Right ventricle myocardium superior (tissue), 1 donor: ENCODE measurements at regions of chr5 and their contacts with region 1.

Region 1: DNA sequence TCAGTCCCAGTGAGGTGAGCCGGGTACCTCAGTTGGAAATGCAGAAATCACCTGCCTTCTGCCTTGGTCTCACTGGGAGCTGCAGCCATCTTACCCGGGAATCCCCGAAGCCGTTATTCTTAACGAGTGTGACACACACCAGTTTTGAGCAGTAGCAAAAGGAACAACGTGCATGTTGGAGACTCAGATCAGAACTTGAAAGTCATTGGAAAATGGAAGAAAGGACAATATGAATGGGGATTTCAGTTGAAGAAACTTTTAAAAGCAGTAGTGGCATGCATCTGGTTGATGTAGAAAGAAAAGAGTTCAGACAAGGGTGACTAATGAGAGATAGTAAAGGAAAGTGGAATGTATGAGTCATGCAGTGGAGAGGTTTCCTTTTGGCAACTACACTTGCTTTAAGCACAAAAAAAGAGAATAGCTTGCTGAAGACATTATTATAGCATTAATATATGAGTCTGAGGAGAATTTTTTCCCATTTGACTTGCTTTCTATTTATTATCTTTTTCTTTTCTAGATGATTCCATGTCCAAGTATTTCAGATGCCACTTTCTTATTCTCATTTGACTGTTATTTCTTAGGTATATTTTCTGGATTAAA is 44.4 kb upstream of the ANKDD1B start:
- DNase-seq: no peak
- ATAC-seq: peak; percentile 98

Region 2: GRCh38 chr5:75511435-75512384 is 55.1 kb before region 1 on chr5 and contains the starts of genes CERT1 and POLK:
- intact Hi-C with region 1: loop called (anchors 10 kb)
- DNase-seq: peak; percentile 98
- ATAC-seq: peak; percentile 96
- total RNA-seq, gene CERT1: 32.1 TPM
- total RNA-seq, gene POLK: 20.6 TPM

Region 3: DNA sequence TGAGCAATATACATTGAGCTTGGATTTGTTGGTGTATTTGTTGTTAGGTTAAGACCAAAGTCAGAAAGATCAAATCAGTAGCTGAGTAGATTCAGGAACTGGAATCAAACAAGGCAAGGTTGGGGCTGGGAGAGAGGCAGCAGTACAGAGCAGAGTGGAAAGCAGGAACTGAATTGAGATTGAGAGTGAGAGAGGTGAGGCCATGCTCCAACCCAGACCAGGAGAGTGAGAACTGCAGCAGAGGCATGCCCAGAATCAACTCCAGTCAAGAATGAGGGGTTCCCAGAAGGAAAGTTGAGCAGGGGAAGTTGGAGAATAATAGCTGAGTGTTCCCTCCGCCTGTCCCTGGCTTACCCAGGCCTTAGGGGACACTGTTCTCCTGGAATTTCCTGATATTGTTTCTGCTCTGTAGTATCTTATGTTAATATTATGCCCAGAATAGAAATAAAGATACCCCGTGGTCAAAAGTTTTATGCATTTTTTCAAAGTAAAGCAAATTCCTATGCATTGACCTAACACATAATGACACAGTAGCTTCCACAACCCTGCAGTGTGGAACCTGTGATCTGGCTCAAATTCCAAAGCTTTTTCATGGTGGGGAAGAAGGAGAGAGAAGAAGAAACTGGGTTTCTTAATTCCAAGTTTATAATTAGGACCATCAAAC is 599.0 kb after region 1 on chr5:
- intact Hi-C with region 1: no loop called
- DNase-seq: no peak
- ATAC-seq: no peak